ENCODE measurements at regions of chrX and their contacts with region 1.

Region 1: DNA sequence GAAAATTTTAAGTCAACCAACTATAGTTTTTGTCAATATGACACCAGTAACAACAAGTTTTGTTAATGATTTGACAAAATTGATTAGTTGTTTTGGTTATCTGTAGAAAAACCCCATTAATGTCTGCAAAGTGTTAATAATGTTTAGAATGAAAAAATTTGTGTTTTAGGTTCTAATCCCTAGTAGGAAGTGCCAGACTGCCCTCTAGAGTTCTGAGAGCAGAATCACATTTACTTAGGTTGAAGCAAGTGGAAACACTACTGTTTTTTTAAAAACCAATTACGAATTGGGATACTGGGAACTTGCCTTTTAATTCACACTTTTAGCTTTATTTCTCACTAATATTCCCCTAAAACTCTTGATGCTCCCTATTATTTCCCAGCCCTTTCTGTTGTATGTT is 101.1 kb upstream of the CYLC1 start:
- DNase-seq: no peak
- H3K4me3 Mint-ChIP-seq: no peak overlapping the region
- H3K27ac Mint-ChIP-seq: no peak overlapping the region
- H3K4me1 Mint-ChIP-seq: no peaks in the 10 kb centered on the region
- H3K27me3 Mint-ChIP-seq: no peaks in the 10 kb centered on the region

Region 2: DNA sequence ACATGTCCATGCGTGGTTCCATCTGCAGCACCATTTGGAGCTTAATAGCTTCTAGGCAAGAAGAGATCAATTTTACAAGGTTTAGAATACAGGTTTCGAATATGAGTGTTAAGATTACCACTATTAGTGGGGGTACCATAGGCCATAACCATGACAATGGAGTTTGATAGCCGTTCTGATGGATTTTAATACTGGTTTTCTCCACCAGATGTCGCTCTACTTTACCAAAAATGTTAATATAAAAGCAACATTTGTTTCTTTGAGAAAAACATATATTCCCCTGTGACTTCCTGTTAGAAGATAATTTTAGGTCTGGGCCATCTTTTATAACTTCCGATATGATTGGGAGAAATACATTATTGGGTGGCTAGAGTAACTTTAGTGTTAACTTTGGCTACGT is 751.5 kb before region 1 on chrX:
- CTCF ChIA-PET with region 1: no interaction called
- intact Hi-C with region 1: loop called (anchors 5 kb)
- DNase-seq: no peak
- H3K4me3 Mint-ChIP-seq: no peak overlapping the region
- H3K27ac Mint-ChIP-seq: no peak overlapping the region
- H3K4me1 Mint-ChIP-seq: no peaks in the 10 kb centered on the region
- H3K27me3 Mint-ChIP-seq: no peaks in the 10 kb centered on the region

Region 3: GRCh38 chrX:84118761-84119160 is 358.9 kb after region 1 on chrX:
- CTCF ChIA-PET with region 1: no interaction called
- intact Hi-C with region 1: no loop called
- DNase-seq: no peak
- H3K4me3 Mint-ChIP-seq: no peak overlapping the region
- H3K27ac Mint-ChIP-seq: no peak overlapping the region
- H3K4me1 Mint-ChIP-seq: no peaks in the 10 kb centered on the region
- H3K27me3 Mint-ChIP-seq: no peaks in the 10 kb centered on the region

Measured in activated naive CD4-positive, alpha-beta T cell treated with anti-CD3 and anti-CD28 coated beads for 36 hours (primary cell).